Activated T-helper 1 cell treated with anti-CD3 and anti-CD28 coated beads, Interleukin-12 subunit alpha, Interleukin-12 subunit beta, Interleukin-2, Interleukin-4 antibody, amounts not matched to agents 30 ng/mL and 10 ng/mL and 1 ng/mL, durations not matched to agents 14 hours and 24 hours and 36 hours (primary cell): ENCODE measurements at regions of chr6 and their contacts with region 1.

Region 1: GRCh38 chr6:27177485-27178406 is 69.8 kb upstream of the PRSS16 start:
- DNase-seq: peak; percentile 66
- H3K4me3 Mint-ChIP-seq: peak overlapping the region; percentile 95
- H3K27ac Mint-ChIP-seq: peak overlapping the region; percentile 93
- H3K4me1 Mint-ChIP-seq: peaks cover 7% of the 10 kb centered on the region
- H3K27me3 Mint-ChIP-seq: peaks cover 36% of the 10 kb centered on the region

Region 2: DNA sequence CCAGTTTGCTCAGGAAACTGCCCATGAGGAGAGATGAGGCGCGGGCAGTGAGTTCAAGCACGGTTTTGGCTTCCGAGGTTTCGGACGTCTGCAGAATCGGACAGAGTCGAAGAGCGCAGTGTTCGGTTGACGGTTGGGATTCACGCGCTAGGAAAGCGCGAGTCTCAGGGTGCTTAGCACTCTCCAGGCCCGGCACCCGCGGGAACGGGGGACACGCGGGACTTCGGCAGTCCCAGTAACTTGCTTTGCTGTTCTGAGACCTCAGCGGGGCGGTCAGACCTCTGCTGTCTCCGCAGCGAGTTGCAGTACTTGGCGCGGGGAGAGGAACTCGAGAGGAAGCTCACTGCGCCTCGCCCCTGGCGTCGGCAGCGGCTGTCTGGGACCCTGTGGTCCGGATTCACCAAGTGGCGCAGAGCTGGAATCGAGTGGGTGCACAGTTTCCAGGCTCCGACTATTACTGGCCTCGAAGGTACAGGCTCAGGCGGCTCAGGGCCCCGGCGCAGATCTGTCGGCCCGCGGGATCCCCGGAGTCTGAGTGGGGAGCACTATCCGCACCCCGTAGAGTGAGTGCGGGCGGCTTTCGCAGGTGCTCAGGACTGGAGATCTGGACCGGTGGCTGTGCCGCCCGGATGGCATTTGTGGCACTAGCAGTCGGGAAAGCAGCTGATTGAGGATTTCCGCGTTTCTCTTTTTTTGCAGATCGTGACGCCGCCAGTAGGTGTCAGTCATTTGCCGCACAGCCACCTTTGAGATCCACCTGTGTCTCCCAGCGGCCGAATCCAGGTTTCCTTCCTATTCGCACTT is 134.6 kb after region 1 on chr6 and contains the start of gene POM121L2:
- intact Hi-C with region 1: loop called (anchors 5 kb)
- DNase-seq: peak; percentile 41
- H3K4me3 Mint-ChIP-seq: peak within 1 kb of the TSS; percentile 78
- H3K27ac Mint-ChIP-seq: no peak within 1 kb of the TSS
- H3K4me1 Mint-ChIP-seq: peaks cover 7% of the 10 kb centered on the region
- H3K27me3 Mint-ChIP-seq: peaks cover 65% of the 10 kb centered on the region
- total RNA-seq, gene POM121L2: not detected in 2 replicates